AG04450 (cell line): ENCODE measurements at regions of chr10 and their contacts with region 1.

Region 1: GRCh38 chr10:123559066-123559822 is 106.9 kb upstream of the GPR26 start:
- DNase-seq: no peak
- H3K4me3 ChIP-seq: no peak overlapping the region
- H3K27ac ChIP-seq: no peak overlapping the region
- H3K27me3 ChIP-seq: no peaks in the 10 kb centered on the region
- CTCF ChIP-seq: peak; percentile 88

Region 2: DNA sequence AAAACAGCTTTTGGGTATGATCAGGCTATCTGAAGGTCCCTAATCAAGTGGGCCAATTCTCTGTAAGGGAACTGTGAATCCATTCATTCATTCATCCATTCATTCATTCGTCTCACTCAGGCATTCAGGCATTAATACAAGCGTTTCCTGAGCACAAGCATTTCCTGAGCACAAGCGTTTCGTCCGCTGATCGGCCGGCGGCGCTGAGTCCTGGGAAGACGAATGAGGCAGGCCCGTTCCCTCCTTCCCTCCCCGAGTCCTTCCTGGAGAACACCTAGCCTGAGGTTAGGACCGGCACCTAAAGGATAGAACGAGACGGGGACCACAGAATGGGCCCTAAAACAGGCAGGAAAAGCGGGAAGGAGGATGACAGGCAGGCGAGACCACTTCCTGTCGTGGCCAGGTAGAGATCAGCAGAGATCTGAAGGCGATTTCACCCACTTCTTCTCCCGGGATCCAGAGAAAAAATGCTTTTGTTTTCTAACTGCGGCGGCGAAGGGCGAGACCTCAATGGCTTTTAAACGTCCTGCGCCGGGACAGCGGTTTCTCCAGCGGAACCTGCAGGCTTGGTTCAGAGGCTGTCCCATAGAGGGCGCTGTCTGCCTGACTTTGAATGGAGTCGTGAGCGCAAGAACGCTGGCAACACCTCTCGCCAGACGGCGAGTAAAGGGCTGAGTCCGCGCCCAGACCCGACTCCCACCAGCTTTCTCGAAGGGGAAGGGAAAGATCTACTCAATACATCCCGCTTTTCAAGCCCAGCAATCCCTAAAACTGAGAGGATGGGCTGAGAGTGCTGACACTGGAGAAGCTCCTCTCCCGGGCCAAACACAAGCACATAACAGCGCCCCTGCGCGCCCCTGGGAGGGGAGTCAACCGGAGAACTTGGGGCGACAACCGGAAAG is 426.4 kb before region 1 on chr10:
- CTCF ChIA-PET with region 1: interaction called, 10 read pairs
- POLR2A ChIA-PET with region 1: no interaction called
- DNase-seq: peak; percentile 24
- H3K4me3 ChIP-seq: peak overlapping the region; percentile 50
- H3K27ac ChIP-seq: no peak overlapping the region
- H3K27me3 ChIP-seq: peaks cover 72% of the 10 kb centered on the region
- CTCF ChIP-seq: peak; percentile 94

Region 3: GRCh38 chr10:123512901-123513775 is 46.1 kb before region 1 on chr10:
- CTCF ChIA-PET with region 1: no interaction called
- POLR2A ChIA-PET with region 1: no interaction called
- DNase-seq: no peak
- H3K4me3 ChIP-seq: no peak overlapping the region
- H3K27ac ChIP-seq: no peak overlapping the region
- H3K27me3 ChIP-seq: no peaks in the 10 kb centered on the region
- CTCF ChIP-seq: no peak

Region 4: GRCh38 chr10:123772645-123773508 is 213.6 kb after region 1 on chr10:
- CTCF ChIA-PET with region 1: no interaction called
- POLR2A ChIA-PET with region 1: no interaction called
- DNase-seq: no peak
- H3K4me3 ChIP-seq: no peak overlapping the region
- H3K27ac ChIP-seq: no peak overlapping the region
- H3K27me3 ChIP-seq: no peaks in the 10 kb centered on the region
- CTCF ChIP-seq: no peak